Esophagus muscularis mucosa (tissue), 4 donors: ENCODE measurements at regions of chr18 and their contacts with region 1.

Region 1: DNA sequence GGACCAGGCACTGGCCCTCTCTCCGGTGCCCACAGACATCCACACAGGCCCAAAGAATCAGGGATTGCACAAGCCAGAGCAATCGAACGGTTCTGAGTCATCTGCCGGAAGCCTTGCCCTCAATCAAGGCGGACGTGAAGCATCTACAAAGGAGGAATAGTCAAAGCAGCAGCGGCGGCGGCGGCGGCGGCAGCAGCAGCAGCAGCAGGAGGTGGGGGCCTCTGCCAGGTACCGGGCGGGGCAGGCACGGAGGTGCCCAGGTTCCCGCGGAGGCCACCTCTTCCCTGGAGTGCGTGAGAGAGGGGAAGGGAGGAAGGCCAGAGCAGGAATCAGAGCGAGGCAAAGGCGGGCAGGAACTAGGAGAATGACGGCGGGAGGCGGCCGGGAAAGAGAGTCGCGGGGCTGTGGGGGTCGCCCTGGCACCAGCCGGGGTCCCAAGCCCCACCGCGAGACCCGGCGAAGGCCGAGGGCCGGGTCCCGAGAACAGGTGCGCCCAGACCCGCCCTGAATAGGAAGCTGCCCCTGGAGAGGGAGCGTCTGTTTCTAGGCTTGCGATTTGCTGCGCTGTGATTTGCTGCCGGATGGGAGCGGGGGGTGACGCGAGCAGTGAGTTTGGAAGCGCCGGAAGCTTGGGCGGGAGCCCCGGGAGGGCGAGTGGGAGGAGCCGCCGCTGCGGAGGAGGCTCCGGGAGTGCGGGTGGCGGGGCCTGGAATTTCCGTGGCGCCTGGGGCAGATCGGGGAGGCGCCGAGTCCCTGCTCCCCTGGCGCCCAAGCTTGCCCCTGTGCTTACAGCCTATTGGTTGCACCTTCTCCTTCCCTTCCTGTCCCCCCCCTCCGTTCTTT is at the start of gene SERPINB8:
- DNase-seq: peak; percentile 98
- H3K4me3 ChIP-seq: peak within 1 kb of the TSS; percentile 65 to 81 (median 76)
- H3K27ac ChIP-seq: peak within 1 kb of the TSS; percentile 89 to 97 (median 93)
- H3K4me1 ChIP-seq: peaks cover 5 to 17% (median 15%) of the 10 kb centered on the region in 4 donors
- H3K27me3 ChIP-seq: no peaks in the 10 kb centered on the region
- CTCF ChIP-seq: no peak
- EP300 ChIP-seq: no peak
- POLR2A ChIP-seq: peak; percentile 40
- total RNA-seq, gene SERPINB8: 6.2 to 18.4 (median 11.1) TPM

Region 2: GRCh38 chr18:62522504-62523254 is 1447.5 kb before region 1 on chr18 and contains the start of gene ZCCHC2:
- intact Hi-C with region 1: loop called (anchors 10 kb)
- DNase-seq: peak; percentile 99
- H3K4me3 ChIP-seq: peak within 1 kb of the TSS; percentile 91 to 96 (median 94)
- H3K27ac ChIP-seq: peak within 1 kb of the TSS; percentile 95 to 99 (median 98)
- H3K4me1 ChIP-seq: peaks cover 22 to 39% (median 30%) of the 10 kb centered on the region in 4 donors
- H3K27me3 ChIP-seq: no peaks in the 10 kb centered on the region
- CTCF ChIP-seq: no peak
- EP300 ChIP-seq: no peak
- POLR2A ChIP-seq: peak; percentile 73
- total RNA-seq, gene ZCCHC2: 18.9 to 26.1 (median 23.8) TPM